ENCODE measurements at regions of chr1 and their contacts with region 1.

Region 1: GRCh38 chr1:206030714-206031113 is 7.0 kb upstream of the CTSE start:
- DNase-seq: peak; percentile 79
- H3K4me3 Mint-ChIP-seq: no peak overlapping the region
- H3K27ac Mint-ChIP-seq: no peak overlapping the region
- H3K4me1 Mint-ChIP-seq: peaks cover 6% of the 10 kb centered on the region
- H3K27me3 Mint-ChIP-seq: peaks cover 4% of the 10 kb centered on the region

Region 2: GRCh38 chr1:205919026-205919746 is 111.5 kb before region 1 on chr1:
- CTCF ChIA-PET with region 1: interaction called, 18 read pairs
- POLR2A ChIA-PET with region 1: no interaction called
- intact Hi-C with region 1: no loop called
- DNase-seq: peak; percentile 84
- H3K4me3 Mint-ChIP-seq: no peak overlapping the region
- H3K27ac Mint-ChIP-seq: no peak overlapping the region
- H3K4me1 Mint-ChIP-seq: no peaks in the 10 kb centered on the region
- H3K27me3 Mint-ChIP-seq: no peaks in the 10 kb centered on the region

Region 3: GRCh38 chr1:205983925-205984725 is 46.6 kb before region 1 on chr1:
- CTCF ChIA-PET with region 1: interaction called, 15 read pairs
- POLR2A ChIA-PET with region 1: no interaction called
- intact Hi-C with region 1: loop called (anchors 1 kb)
- DNase-seq: peak; percentile 42
- H3K4me3 Mint-ChIP-seq: no peak overlapping the region
- H3K27ac Mint-ChIP-seq: no peak overlapping the region
- H3K4me1 Mint-ChIP-seq: no peaks in the 10 kb centered on the region
- H3K27me3 Mint-ChIP-seq: peaks cover 1% of the 10 kb centered on the region

Region 4: GRCh38 chr1:206012086-206012859 is 18.4 kb before region 1 on chr1:
- CTCF ChIA-PET with region 1: interaction called, 10 read pairs
- POLR2A ChIA-PET with region 1: no interaction called
- intact Hi-C with region 1: no loop called
- DNase-seq: peak; percentile 49
- H3K4me3 Mint-ChIP-seq: no peak overlapping the region
- H3K27ac Mint-ChIP-seq: no peak overlapping the region
- H3K4me1 Mint-ChIP-seq: peaks cover 22% of the 10 kb centered on the region
- H3K27me3 Mint-ChIP-seq: peaks cover 4% of the 10 kb centered on the region

Region 5: GRCh38 chr1:206050655-206051235 is 20.0 kb after region 1 on chr1:
- CTCF ChIA-PET with region 1: interaction called, 20 read pairs
- POLR2A ChIA-PET with region 1: no interaction called
- intact Hi-C with region 1: no loop called
- DNase-seq: peak; percentile 76
- H3K4me3 Mint-ChIP-seq: no peak overlapping the region
- H3K27ac Mint-ChIP-seq: peak overlapping the region; percentile 57
- H3K4me1 Mint-ChIP-seq: peaks cover 37% of the 10 kb centered on the region
- H3K27me3 Mint-ChIP-seq: no peaks in the 10 kb centered on the region

Region 6: GRCh38 chr1:206094024-206094423 is 63.3 kb after region 1 on chr1:
- CTCF ChIA-PET with region 1: interaction called, 10 read pairs
- POLR2A ChIA-PET with region 1: no interaction called
- intact Hi-C with region 1: no loop called
- DNase-seq: no peak
- H3K4me3 Mint-ChIP-seq: no peak overlapping the region
- H3K27ac Mint-ChIP-seq: no peak overlapping the region
- H3K4me1 Mint-ChIP-seq: no peaks in the 10 kb centered on the region
- H3K27me3 Mint-ChIP-seq: peaks cover 8% of the 10 kb centered on the region

Region 7: GRCh38 chr1:206106328-206107167 is 75.8 kb after region 1 on chr1:
- CTCF ChIA-PET with region 1: interaction called, 298 read pairs
- POLR2A ChIA-PET with region 1: interaction called, 3 read pairs
- intact Hi-C with region 1: loop called (anchors 1 kb)
- DNase-seq: peak; percentile 85
- H3K4me3 Mint-ChIP-seq: no peak overlapping the region
- H3K27ac Mint-ChIP-seq: no peak overlapping the region
- H3K4me1 Mint-ChIP-seq: no peaks in the 10 kb centered on the region
- H3K27me3 Mint-ChIP-seq: no peaks in the 10 kb centered on the region

Measured in activated CD4-positive, alpha-beta memory T cell treated with anti-CD3 and anti-CD28 coated beads for 36 hours (primary cell).